ENCODE measurements at regions of chr11 and their contacts with region 1.

Region 1: DNA sequence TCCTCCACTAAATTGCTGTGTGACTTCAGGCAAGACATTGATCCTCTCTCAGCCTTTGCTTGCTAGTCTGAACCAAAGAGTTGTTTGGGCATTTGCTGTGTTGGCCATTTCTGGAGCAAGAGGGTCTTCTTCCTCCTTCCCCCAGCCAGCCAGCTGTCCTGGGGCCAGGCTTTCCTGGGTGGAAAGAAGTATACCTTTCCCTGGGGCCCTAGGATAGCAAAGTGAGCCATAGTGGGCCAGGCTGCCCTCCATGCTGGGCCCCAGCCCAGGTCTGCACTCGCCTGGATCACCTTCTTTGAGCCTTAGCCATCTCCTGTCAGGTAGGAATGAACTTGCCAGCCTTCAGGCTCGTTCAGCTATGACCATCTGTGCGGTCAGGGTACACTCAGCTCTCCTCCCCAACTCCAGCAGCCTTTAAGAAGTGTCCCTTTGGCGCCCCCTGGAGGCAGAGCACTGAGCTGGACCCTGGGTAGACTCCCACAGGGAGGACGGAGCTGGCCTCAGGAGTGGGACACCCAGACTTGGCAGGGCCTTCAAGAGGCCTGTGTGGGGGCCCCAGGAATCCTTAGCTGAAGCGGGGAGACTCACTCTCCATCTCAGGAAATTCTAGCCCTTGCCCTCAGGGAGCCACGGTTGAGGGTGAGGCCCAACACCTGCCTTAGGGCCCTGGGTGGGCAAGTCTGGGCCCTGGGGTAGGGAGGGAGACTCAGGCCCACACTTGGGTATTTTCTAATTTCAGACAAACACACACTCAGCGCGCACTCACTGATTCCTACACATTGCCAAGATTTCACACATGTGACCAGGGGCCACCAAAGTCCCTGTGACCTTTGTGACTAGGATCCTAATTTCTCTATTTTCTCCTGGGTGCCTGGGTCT is 35.6 kb upstream of the TPBGL start:
- DNase-seq: peak; percentile 64
- ATAC-seq: peak; percentile 100
- H3K4me3 ChIP-seq: no peak overlapping the region
- H3K27ac ChIP-seq: no peak overlapping the region
- H3K4me1 ChIP-seq: no peaks in the 10 kb centered on the region
- H3K27me3 ChIP-seq: peaks cover 30% of the 10 kb centered on the region
- CTCF ChIP-seq: peak; percentile 94 to 97 (median 94)
- POLR2A ChIP-seq: no peak
- RAD21 ChIP-seq: peak; percentile 92

Region 2: GRCh38 chr11:74929431-74930363 is 275.2 kb before region 1 on chr11:
- CTCF ChIA-PET with region 1: interaction called, 21 read pairs
- POLR2A ChIA-PET with region 1: no interaction called
- RAD21 ChIA-PET with region 1: no interaction called
- intact Hi-C with region 1: loop called (anchors 1 kb)
- DNase-seq: peak; percentile 81
- ATAC-seq: peak; percentile 99
- H3K4me3 ChIP-seq: no peak overlapping the region
- H3K27ac ChIP-seq: no peak overlapping the region
- H3K4me1 ChIP-seq: no peaks in the 10 kb centered on the region
- H3K27me3 ChIP-seq: no peaks in the 10 kb centered on the region
- CTCF ChIP-seq: peak; percentile 85 to 99 (median 88)
- POLR2A ChIP-seq: no peak
- RAD21 ChIP-seq: peak; percentile 84

Region 3: GRCh38 chr11:75022759-75023396 is 182.0 kb before region 1 on chr11:
- CTCF ChIA-PET with region 1: interaction called, 79 read pairs
- POLR2A ChIA-PET with region 1: no interaction called
- RAD21 ChIA-PET with region 1: interaction called, 14 to 19 read pairs
- intact Hi-C with region 1: loop called (anchors 1 kb)
- DNase-seq: peak; percentile 60
- ATAC-seq: peak; percentile 99
- H3K4me3 ChIP-seq: no peak overlapping the region
- H3K27ac ChIP-seq: no peak overlapping the region
- H3K4me1 ChIP-seq: no peaks in the 10 kb centered on the region
- H3K27me3 ChIP-seq: no peaks in the 10 kb centered on the region
- CTCF ChIP-seq: peak; percentile 95 to 98 (median 98)
- POLR2A ChIP-seq: no peak
- RAD21 ChIP-seq: peak; percentile 95

Region 4: DNA sequence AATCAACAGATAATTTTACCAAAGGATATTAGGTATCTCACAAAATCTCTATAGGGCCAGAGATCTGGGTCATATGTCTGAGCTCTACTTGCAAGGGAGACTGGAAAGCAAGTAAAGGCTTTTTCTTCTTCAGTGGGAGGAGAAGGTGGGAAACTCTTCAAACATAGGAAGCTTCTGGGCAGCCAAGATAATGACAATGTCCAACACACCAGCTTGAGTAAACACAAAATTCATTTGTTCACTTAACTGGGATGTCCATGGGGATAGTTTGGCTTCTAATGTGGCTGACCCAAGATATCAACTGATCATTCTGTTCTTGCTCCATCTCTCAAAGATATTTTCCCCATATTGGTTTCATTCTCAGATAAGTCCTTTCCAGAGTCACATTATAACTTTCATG is 145.6 kb before region 1 on chr11:
- CTCF ChIA-PET with region 1: no interaction called
- POLR2A ChIA-PET with region 1: no interaction called
- RAD21 ChIA-PET with region 1: no interaction called
- intact Hi-C with region 1: no loop called
- DNase-seq: no peak
- ATAC-seq: no peak
- H3K4me3 ChIP-seq: no peak overlapping the region
- H3K27ac ChIP-seq: no peak overlapping the region
- H3K4me1 ChIP-seq: peaks cover 0 to 6% of the 10 kb centered on the region in 2 experiments; a peak in 1 of 4 replicates
- H3K27me3 ChIP-seq: no peaks in the 10 kb centered on the region
- CTCF ChIP-seq: no peak
- POLR2A ChIP-seq: no peak
- RAD21 ChIP-seq: no peak

Region 5: DNA sequence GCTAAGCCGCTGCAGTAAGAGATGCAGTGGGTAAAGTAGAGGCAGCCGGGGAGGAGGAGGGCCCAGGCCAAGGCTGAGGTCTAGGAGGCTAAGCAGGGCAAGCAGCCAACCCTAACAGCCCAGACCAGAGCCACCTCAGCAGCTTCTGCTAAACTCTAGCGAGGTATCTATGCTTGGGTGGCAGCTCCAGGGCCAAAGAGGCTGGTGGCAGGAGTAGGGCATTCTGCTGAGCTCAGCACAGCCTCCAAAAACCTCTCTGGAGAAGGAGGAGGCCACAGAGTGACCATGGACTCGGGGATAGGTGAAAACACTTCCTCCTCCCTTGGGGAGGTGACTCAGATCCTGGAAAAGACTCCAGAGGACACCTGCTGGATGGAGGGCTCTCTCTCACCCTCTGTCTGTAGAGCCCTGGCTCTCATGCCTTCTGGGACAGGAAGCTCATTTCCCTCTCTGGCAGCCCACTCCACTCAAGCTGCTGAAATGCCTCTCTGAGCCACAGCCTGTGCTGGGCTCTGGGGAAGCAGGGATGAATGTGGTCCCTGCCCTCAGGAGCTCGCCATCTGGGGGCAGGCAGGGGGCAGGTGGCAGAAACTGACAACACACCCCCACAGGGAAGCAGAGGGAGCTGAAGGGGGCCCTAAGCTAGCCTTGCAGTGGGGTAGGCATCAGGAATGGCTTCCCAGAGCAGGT is 19.2 kb after region 1 on chr11:
- CTCF ChIA-PET with region 1: interaction called, 12 read pairs
- POLR2A ChIA-PET with region 1: no interaction called
- RAD21 ChIA-PET with region 1: no interaction called
- intact Hi-C with region 1: no loop called
- DNase-seq: no peak
- ATAC-seq: peak; percentile 95
- H3K4me3 ChIP-seq: no peak overlapping the region
- H3K27ac ChIP-seq: no peak overlapping the region
- H3K4me1 ChIP-seq: peaks cover 0 to 7% of the 10 kb centered on the region in 2 experiments; a peak in 2 of 4 replicates
- H3K27me3 ChIP-seq: peaks cover 13% of the 10 kb centered on the region; the same call in 1 of the 2 replicates
- CTCF ChIP-seq: peak in 2 of 3 experiments; percentile 25 to 37; a peak in 3 of 6 replicates
- POLR2A ChIP-seq: no peak
- RAD21 ChIP-seq: peak; percentile 30

Region 6: GRCh38 chr11:75241036-75241905 is 36.3 kb after region 1 on chr11:
- CTCF ChIA-PET with region 1: interaction called, 14 read pairs
- POLR2A ChIA-PET with region 1: no interaction called
- RAD21 ChIA-PET with region 1: interaction called, 3 to 5 read pairs
- intact Hi-C with region 1: no loop called
- DNase-seq: peak; percentile 54
- ATAC-seq: peak; percentile 91
- H3K4me3 ChIP-seq: peak overlapping the region; percentile 37 to 56
- H3K27ac ChIP-seq: peak overlapping the region; percentile 64; the same call in 1 of the 2 replicates
- H3K4me1 ChIP-seq: peaks cover 6 to 16% of the 10 kb centered on the region in 2 experiments; a peak in 3 of 4 replicates
- H3K27me3 ChIP-seq: no peaks in the 10 kb centered on the region
- CTCF ChIP-seq: peak; percentile 66 to 86 (median 70)
- POLR2A ChIP-seq: no peak
- RAD21 ChIP-seq: no peak; the same call in none of the 2 replicates